ENCODE measurements at regions of chr17 and their contacts with region 1.

Region 1: GRCh38 chr17:8156246-8156992 is 4.2 kb upstream of the PER1 start:
- DNase-seq: peak; percentile 99 to 100
- H3K4me3 ChIP-seq: peak overlapping the region; percentile 76 to 93 (median 85)
- H3K27ac ChIP-seq: peak overlapping the region; percentile 89
- H3K4me1 ChIP-seq: peaks cover 12 to 35% (median 20%) of the 10 kb centered on the region in 4 experiments
- H3K27me3 ChIP-seq: no peaks in the 10 kb centered on the region
- CTCF ChIP-seq: peak in 1 of 3 experiments; percentile 9; a peak in 1 of 4 replicates
- EP300 ChIP-seq: peak in 1 of 2 experiments; percentile 63; a peak in 1 of 3 replicates
- POLR2A ChIP-seq: peak; percentile 54 to 69
- RAD21 ChIP-seq: peak in 1 of 2 experiments; percentile 23; a peak in 1 of 4 replicates

Region 2: DNA sequence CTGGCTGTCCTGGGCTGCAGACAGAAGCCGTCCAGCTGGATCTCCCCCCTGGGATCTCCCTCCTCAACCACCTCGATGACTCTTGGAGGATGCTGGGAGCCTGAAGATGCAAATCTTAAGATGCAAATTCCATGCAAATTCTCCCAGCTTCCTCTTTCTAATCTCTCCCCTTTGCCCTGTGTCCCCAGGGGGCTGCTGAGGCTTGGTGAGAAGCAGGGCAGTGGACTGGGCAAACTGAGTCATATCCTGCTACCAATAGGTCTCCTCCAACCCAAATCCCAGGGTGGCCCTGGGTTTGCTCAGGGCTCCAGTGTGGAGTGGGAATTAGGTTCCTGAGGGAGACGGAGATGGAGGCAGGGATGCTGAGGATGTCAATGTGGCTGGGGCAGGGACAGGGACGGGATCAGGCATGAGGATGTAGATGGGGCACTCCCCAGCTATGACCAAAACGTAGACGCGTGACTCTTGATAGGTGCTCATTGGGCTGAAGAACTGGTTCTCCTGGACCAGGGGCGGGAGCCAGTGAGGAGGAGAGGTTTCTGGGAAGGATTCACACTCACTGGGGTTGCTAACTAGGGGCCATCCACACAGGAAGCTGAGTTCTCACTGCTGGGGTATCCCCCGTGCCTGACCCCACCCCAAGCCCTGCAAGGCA is 65.3 kb before region 1 on chr17:
- CTCF ChIA-PET with region 1: no interaction called
- POLR2A ChIA-PET with region 1: no interaction called
- DNase-seq: no peak
- H3K4me3 ChIP-seq: no peak overlapping the region
- H3K27ac ChIP-seq: no peak overlapping the region
- H3K4me1 ChIP-seq: peaks cover 0 to 7% (median under 1%) of the 10 kb centered on the region in 4 experiments; a peak in 5 of 7 replicates
- H3K27me3 ChIP-seq: peaks cover 0 to 10% (median 4%) of the 10 kb centered on the region in 4 experiments; a peak in 4 of 7 replicates
- CTCF ChIP-seq: no peak
- EP300 ChIP-seq: no peak
- POLR2A ChIP-seq: no peak
- RAD21 ChIP-seq: no peak

Region 3: DNA sequence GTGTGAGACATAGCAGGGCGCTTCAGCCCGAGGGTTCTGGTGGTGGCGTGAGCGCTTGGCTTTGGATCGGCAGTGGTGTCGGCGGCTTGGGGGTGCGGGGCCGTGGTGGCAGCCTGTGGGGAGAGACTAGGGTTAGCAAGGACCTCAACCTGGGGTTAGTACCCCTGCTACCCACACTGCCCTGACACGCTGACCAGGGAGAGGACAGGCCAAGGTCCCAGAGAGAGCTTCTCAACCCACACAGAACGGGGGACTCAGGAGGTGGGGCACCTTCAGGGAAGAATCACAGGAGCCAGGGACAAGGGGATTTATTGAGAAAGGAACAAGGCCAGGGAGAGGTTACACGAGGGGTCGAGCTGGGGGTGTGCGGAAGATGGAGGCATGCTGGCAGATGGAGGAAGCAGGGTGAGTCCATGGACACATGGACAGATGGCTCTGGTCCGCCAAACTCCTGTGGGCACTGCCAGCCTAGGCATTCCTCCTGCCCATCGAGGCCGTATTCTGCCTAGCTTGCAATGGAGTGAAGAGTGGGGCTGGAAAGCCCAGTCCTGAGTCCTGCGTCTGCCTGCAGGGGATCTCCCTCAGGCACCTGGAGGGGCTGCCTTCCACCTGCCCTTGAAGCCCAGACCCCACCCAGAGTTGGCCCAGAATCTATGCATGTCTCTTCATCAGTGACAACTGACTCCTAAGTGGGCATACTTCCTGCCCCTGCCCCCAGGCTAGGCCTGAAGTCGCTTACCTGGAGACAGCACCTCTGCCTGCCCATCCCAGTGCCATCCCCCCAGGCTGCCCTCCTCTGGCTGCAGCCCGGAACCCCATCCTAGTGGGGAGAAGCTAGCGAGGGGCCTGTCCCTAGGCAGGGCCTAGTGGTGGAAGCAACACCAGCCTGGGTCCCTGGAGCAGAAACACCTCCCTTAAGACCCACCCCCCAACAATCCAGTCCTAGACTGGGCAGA is 12.4 kb before region 1 on chr17:
- CTCF ChIA-PET with region 1: interaction called, 133 read pairs
- POLR2A ChIA-PET with region 1: interaction called, 76 read pairs
- DNase-seq: no peak
- H3K4me3 ChIP-seq: no peak overlapping the region
- H3K27ac ChIP-seq: no peak overlapping the region
- H3K4me1 ChIP-seq: peaks cover 0 to 3% (median 1%) of the 10 kb centered on the region in 4 experiments; a peak in 1 of 7 replicates
- H3K27me3 ChIP-seq: no peaks in the 10 kb centered on the region
- CTCF ChIP-seq: no peak
- EP300 ChIP-seq: no peak
- POLR2A ChIP-seq: no peak
- RAD21 ChIP-seq: no peak

Region 4: DNA sequence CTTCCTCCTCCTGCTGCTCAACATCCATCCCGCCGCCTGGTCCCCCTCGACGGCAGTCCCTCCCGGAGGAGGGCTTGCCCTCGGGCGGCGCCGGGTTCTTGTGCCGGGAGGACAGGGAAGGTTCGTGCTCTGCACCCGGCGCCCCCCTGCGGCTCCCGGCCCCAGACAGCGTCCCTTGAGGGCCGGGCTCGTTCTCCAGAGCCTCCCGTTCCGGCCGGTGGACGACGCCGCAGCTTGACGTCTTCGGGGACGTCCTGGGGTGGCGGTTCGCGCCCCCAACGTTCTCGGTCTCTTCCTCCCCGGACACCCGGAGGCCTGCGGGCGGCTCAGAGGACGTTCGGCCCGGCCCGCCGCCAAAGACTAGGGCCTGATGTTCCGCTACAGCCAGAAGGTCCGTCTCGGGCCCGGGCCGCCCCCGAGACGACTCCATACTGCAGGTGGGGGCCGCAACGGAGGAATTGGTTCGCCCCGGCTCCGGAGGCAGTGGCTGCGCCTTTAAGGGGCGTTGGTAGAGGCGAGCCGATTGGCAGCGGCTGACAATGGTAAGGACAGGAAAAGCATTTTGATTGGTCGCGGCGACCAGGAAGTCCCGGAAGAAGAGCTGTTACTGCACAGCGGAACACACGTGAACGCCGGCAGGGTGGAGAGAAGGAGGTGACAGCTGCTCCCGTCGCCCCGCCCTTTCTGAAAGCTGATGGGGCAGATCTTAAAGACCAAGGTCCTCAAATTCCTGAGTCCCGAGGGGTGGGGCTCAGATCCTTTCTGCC is 33.5 kb after region 1 on chr17 and contains the start of gene BORCS6:
- CTCF ChIA-PET with region 1: interaction called, 10 read pairs
- POLR2A ChIA-PET with region 1: interaction called, 8 read pairs
- DNase-seq: peak; percentile 87
- H3K4me3 ChIP-seq: peak within 1 kb of the TSS; percentile 59 to 89 (median 78)
- H3K27ac ChIP-seq: no peak within 1 kb of the TSS
- H3K4me1 ChIP-seq: peaks cover 4 to 21% (median 10%) of the 10 kb centered on the region in 4 experiments; a peak in 6 of 7 replicates
- H3K27me3 ChIP-seq: peaks cover 2 to 17% (median 11%) of the 10 kb centered on the region in 4 experiments
- CTCF ChIP-seq: no peak
- EP300 ChIP-seq: no peak
- POLR2A ChIP-seq: no peak
- RAD21 ChIP-seq: no peak
- total RNA-seq, gene BORCS6: 3.6 and 4.6 TPM in 2 replicates

Region 5: DNA sequence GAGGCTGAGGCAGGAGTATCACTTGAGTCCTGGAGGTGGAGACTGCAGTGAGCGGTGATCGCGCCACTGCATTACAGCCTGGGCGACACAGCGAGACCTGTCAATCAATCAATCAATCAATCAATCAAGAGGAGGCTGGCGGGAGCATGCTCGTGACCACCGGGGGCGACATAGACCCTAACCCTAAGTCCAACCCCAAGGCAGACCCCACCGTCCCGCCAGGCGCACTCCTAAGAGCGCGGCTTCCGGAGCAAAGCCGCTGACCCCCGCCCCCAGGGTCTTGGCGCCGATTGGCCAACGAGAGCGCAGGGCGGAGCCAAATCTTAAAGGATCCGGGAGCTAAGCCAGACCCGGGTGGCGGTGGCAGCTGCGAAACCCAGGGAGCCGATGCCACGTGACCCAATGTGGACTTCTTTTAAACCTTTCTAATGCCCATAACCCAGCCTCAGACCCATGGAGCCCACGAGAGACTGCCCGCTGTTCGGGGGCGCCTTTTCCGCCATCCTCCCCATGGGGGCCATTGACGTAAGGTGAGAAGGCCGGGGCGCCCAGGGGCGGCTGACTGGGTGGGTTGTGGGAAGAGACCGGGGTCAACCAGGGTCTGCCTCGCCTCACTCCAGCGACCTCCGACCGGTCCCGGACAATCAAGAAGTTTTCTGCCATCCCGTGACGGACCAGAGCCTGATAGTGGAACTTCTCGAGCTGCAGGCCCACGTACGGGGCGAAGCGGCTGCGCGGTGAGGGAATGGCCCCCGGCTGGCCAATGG is 132.1 kb after region 1 on chr17 and contains the start of gene RANGRF:
- CTCF ChIA-PET with region 1: no interaction called
- POLR2A ChIA-PET with region 1: no interaction called
- DNase-seq: peak; percentile 60 to 94
- H3K4me3 ChIP-seq: peak within 1 kb of the TSS; percentile 65 to 87 (median 72)
- H3K27ac ChIP-seq: no peak within 1 kb of the TSS; the same call in 1 of the 2 replicates
- H3K4me1 ChIP-seq: peaks cover 0 to 8% (median 5%) of the 10 kb centered on the region in 4 experiments; a peak in 4 of 7 replicates
- H3K27me3 ChIP-seq: no peaks in the 10 kb centered on the region
- CTCF ChIP-seq: peak in 2 of 3 experiments; percentile 8 to 16; a peak in 2 of 4 replicates
- EP300 ChIP-seq: no peak
- POLR2A ChIP-seq: peak; percentile 45 to 46
- RAD21 ChIP-seq: no peak
- total RNA-seq, gene RANGRF: 36.9 and 39.4 TPM in 2 replicates